ENCODE measurements at regions of chr4 and their contacts with region 1.

Region 1: GRCh38 chr4:87679449-87680169 is 29.5 kb downstream of the DMP1 start:
- DNase-seq: peak; percentile 10
- ATAC-seq: no peak
- H3K4me3 ChIP-seq: no peak overlapping the region
- H3K27ac ChIP-seq: no peak overlapping the region
- H3K4me1 ChIP-seq: no peaks in the 10 kb centered on the region
- H3K27me3 ChIP-seq: no peaks in the 10 kb centered on the region
- CTCF ChIP-seq: peak; percentile 83

Region 2: GRCh38 chr4:87838890-87839591 is 159.4 kb after region 1 on chr4:
- CTCF ChIA-PET with region 1: interaction called, 3 read pairs
- POLR2A ChIA-PET with region 1: no interaction called
- in situ Hi-C with region 1: no loop called
- intact Hi-C with region 1: loop called (anchors 1 kb)
- DNase-seq: no peak
- ATAC-seq: no peak; the same call in 1 of the 2 replicates
- H3K4me3 ChIP-seq: no peak overlapping the region
- H3K27ac ChIP-seq: no peak overlapping the region
- H3K4me1 ChIP-seq: no peaks in the 10 kb centered on the region
- H3K27me3 ChIP-seq: no peaks in the 10 kb centered on the region; the same call in 1 of the 2 replicates
- CTCF ChIP-seq: peak; percentile 69

Region 3: DNA sequence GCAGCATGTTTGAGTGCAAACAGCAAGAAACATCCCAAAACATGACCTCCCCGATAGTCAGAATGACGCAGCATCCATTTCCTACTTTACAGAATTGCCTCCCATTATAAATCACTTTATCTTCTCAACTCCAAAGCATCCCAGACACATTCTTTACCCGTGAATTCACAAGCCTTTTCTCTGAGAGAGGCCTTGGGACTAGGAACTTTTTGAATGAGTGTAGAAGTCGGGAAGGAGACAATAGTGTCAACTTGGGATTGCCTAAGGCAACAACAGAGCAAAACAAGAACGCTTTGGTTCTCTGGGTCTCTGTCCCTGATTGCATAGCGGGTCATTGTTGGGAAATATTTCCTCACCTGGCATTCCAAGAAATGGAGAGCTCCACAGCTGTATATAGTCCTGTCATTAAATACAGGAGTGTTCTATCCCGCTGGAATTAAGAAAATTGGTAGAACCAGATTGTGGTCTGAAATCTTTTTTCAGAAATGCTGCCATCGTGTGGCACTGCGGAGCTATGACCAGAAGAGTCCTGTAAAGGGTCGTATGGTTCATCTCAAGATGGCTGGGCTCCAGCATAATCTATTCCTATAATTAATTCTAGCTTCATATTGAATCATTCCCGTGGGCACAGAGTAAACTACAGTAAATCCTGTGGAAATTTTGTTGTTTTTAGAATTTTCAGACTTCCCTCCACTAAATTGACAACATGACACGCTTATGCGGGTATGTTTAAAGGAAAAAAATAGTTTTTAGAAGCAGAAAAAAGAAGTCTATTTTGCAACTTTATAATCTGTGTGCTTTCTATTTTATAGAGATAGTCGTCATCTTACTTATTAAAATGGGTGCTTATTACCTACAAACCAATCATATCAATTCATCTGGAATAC is 293.9 kb after region 1 on chr4:
- CTCF ChIA-PET with region 1: no interaction called
- POLR2A ChIA-PET with region 1: no interaction called
- in situ Hi-C with region 1: no loop called
- intact Hi-C with region 1: loop called (anchors 10 kb)
- DNase-seq: peak; percentile 18
- ATAC-seq: peak; percentile 77; the same call in 1 of the 2 replicates
- H3K4me3 ChIP-seq: no peak overlapping the region
- H3K27ac ChIP-seq: no peak overlapping the region
- H3K4me1 ChIP-seq: no peaks in the 10 kb centered on the region; the same call in 1 of the 2 replicates
- H3K27me3 ChIP-seq: peaks cover 6% of the 10 kb centered on the region; the same call in 1 of the 2 replicates
- CTCF ChIP-seq: peak; percentile 78

Region 4: DNA sequence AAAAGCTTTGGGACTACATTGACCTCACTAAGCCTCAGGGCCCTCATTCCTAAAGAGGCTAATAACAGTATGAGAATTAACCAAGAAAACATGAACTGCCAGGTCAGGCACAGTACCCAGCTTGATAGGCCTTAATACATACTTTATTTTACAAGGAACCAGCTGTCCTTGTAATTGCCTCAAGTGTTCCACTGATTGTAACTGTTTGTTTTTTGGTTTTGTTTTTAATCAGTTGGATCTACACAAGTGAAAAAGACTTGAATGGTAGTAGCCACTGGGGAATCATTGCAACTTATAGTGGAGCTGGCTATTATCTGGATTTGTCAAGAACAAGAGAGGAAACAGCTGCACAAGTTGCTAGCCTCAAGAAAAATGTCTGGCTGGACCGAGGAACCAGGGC is 363.4 kb after region 1 on chr4:
- CTCF ChIA-PET with region 1: no interaction called
- POLR2A ChIA-PET with region 1: no interaction called
- in situ Hi-C with region 1: no loop called
- intact Hi-C with region 1: no loop called
- DNase-seq: no peak
- ATAC-seq: no peak
- H3K4me3 ChIP-seq: no peak overlapping the region
- H3K27ac ChIP-seq: no peak overlapping the region
- H3K4me1 ChIP-seq: no peaks in the 10 kb centered on the region
- H3K27me3 ChIP-seq: no peaks in the 10 kb centered on the region
- CTCF ChIP-seq: no peak

Measured in Panc1 (cell line).